ENCODE measurements at regions of chr9 and their contacts with region 1.

Region 1: DNA sequence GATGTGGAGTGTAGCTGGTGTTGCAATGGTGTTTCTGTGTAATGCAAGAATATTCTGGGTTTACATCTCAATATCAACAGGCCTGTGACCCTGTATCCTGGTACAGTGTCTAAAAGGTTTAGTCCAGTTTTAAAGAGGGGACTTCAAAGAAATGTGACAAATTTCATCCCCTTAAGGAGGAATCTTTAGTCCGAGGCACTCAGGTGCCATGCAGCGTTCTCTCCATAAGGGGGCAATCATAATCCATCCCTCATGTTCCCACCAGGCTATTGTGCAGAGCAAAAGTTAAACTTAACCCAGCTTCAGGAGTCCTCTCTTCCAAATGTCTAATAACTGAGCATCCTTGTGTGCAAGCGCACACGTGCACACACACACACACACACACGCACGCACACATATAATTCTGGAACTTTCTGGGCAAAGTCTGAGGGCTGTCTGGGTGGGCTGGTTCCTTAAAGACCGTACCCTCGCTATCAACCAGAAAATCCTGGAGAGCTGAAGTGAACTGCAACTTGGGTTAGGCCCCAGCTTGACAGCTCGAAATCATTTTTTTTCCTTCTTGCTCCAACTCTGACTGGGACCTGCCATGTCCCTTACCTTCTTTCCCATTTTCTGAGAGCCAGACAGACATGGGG is 46.0 kb downstream of the CRB2 start:
- DNase-seq: no peak
- ATAC-seq: peak; percentile 86

Region 2: DNA sequence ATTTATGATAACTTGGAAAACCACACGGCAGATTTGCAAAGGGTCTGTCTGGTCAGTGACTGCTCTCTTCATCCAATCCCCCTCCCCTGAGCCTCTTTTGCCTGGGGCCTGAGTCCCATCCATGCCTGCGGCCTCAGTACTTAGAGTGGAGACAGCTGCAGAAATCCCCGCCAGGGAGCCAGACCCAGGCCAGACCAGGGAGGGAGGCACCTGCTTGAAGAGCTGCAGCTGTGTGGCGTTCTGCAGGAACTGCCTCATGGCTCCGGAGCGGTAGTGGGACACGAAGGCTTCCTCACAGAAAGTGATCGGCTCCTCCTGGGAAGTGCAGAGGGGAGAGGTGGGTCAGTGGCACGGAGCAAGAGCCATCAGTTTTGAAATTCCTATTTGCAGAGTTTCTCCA is 55.6 kb after region 1 on chr9:
- intact Hi-C with region 1: no loop called
- DNase-seq: no peak
- ATAC-seq: peak; percentile 49

Region 3: GRCh38 chr9:123544007-123544827 is 142.2 kb after region 1 on chr9:
- intact Hi-C with region 1: loop called (anchors 5 kb)
- DNase-seq: no peak
- ATAC-seq: peak; percentile 54

Measured in Right ventricle myocardium inferior (tissue), 1 donor.